ENCODE measurements at regions of chr2 and their contacts with region 1.

Region 1: DNA sequence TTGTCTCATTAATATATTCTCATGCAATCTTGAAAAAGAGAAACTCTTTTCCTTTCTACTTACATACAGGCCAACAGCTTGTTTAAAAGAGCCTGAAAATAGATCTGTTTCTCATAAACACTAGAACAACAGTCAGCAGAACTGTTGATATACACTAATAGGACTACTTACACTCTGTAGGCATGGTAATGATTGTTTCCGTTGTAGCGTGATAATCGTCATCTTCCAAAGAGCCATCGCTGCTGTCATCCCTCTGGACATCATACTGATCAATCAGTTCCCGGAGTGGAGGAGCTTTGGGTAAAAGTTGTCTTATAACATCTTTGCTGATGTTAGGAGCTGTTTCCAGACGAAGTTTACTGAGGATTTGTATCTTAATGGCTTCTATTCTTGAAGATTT is 476 bp downstream of the MSTN start:
- DNase-seq: no peak
- H3K4me3 ChIP-seq: no peak overlapping the region
- H3K27ac ChIP-seq: no peak overlapping the region
- H3K4me1 ChIP-seq: no peaks in the 10 kb centered on the region
- H3K27me3 ChIP-seq: no peaks in the 10 kb centered on the region
- CTCF ChIP-seq: no peak
- POLR2A ChIP-seq: no peak

Region 2: DNA sequence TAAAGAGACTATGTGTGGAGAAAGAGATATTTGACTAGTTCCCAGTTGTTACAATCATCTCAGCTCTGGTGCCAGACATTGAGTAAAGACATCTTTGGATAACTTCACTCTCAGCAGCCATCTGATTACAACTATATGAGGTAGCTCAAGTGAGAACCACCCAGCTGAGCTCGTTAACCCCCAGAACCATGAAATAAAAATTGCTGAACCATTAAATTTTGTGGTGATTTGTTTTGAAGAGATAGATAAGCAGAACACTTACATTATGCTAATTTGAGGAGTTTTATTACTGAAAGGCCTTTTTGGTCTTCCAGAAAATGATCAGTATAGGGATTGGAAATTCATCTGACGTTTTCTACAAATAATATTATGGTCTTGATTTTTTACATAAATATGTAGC is 176.7 kb before region 1 on chr2:
- intact Hi-C with region 1: loop called (anchors 5 kb)
- DNase-seq: no peak
- H3K4me3 ChIP-seq: no peak overlapping the region
- H3K27ac ChIP-seq: no peak overlapping the region
- H3K4me1 ChIP-seq: no peaks in the 10 kb centered on the region
- H3K27me3 ChIP-seq: no peaks in the 10 kb centered on the region
- CTCF ChIP-seq: no peak
- POLR2A ChIP-seq: no peak